ENCODE measurements at regions of chr1 and their contacts with region 1.

Region 1: GRCh38 chr1:87410776-87411480 is 82.2 kb downstream of the LMO4 start:
- DNase-seq: peak; percentile 69
- ATAC-seq: peak; percentile 46

Region 2: GRCh38 chr1:87392248-87393192 is 18.4 kb before region 1 on chr1:
- intact Hi-C with region 1: no loop called
- DNase-seq: no peak
- ATAC-seq: peak; percentile 46

Region 3: DNA sequence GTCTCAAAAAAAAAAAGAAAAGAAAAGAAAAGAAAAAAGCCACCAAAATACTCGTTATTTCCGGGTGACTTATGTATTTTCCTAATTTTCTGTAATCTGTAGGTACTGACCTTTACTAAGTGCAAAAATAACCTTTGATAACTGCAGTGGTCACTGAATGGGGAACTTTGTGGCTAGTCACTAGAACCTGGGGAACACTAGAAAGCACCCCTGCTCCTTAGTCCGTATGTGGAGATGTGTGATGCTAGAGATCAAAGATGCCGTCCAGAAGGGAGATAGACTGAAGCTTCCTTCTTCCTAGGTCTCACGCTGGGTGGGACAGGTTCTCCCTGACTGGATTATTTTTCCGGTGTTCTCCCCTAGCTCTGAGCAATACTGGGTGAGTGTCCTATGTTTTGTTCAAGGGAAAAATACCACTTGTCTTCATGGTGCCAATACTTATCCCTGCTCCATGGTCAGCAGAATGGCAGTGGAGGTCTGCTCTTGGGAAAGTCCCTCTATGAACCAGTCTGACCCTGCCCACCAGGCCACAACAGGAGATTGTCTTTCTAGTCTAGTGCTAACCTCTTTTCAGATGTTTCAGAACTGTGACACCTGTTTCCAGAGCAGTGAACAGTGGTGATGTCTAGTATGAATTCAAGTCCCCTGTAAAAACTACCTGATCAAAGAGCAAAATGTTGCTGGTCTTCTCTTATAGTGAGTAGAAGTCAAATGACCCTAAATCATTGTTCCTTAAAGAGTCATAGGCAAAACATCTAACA is 1440.6 kb after region 1 on chr1:
- intact Hi-C with region 1: loop called (anchors 5 kb)
- DNase-seq: no peak
- ATAC-seq: no peak